ENCODE measurements at regions of chr7 and their contacts with region 1.

Region 1: DNA sequence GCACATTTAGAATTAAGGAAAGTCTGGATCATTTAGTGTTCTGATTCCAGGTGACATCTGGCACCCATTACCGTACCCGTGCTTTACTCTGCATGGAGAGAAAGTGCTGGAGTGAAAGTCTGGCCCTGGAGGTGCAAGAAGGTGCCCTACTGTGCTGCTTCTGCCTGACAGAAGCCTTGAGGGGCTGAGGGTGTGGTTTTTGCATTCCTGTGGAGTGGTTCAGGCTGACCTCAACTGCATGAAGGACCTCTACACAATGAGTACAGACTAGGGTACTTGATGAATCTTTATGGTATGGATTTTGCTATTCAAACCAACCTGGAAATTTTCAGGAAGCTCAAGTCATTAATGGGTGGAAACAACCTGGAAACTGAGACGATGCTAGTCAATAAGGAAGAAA is 45.1 kb upstream of the GSAP start:
- DNase-seq: no peak
- ATAC-seq: no peak
- H3K4me3 ChIP-seq: no peak overlapping the region
- H3K27ac ChIP-seq: peak overlapping the region; percentile 41 to 65; a peak in 5 of 6 replicates
- H3K4me1 ChIP-seq: peaks cover 74% of the 10 kb centered on the region
- CTCF ChIP-seq: no peak
- EP300 ChIP-seq: no peak
- POLR2A ChIP-seq: no peak
- RAD21 ChIP-seq: no peak

Region 2: DNA sequence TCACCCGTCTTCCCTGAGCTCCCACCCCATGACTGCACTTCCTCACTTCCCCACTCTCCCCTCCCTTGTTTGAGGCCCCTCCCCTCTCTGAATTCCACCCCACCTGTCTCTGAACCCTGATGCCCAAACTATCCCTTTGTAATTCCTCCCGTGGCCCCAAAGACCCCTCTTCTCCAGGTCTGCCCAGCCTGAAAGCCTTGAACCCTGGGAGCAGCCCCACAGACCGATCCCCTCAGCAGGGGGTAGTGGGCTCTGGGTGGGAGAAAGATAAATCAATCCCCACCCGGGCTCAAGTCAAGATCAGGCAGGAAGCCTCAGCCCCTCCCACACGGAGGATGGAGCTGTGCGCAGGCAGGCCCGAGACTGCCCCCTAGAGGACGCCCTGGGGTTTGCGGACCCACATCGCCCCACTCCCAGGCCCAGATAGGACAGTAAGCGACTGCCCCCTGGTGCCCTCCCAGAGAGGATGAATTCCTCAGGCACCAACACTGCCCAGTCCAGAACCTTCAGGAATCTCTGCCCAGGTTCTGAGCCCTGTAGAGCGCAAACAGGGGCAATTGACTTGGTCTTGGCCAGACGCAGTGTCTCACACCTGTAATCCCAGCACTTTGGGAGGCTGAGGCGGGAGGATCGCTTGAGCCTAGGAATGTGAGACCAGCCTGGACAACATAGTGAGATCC is 1147.1 kb before region 1 on chr7:
- CTCF ChIA-PET with region 1: no interaction called
- POLR2A ChIA-PET with region 1: no interaction called
- DNase-seq: peak; percentile 92 to 95
- ATAC-seq: peak; percentile 40 to 67
- H3K4me3 ChIP-seq: no peak overlapping the region
- H3K27ac ChIP-seq: peak overlapping the region; percentile 76 to 83
- H3K4me1 ChIP-seq: peaks cover 27% of the 10 kb centered on the region
- CTCF ChIP-seq: peak; percentile 100
- EP300 ChIP-seq: no peak
- POLR2A ChIP-seq: no peak
- RAD21 ChIP-seq: peak; percentile 100

Region 3: DNA sequence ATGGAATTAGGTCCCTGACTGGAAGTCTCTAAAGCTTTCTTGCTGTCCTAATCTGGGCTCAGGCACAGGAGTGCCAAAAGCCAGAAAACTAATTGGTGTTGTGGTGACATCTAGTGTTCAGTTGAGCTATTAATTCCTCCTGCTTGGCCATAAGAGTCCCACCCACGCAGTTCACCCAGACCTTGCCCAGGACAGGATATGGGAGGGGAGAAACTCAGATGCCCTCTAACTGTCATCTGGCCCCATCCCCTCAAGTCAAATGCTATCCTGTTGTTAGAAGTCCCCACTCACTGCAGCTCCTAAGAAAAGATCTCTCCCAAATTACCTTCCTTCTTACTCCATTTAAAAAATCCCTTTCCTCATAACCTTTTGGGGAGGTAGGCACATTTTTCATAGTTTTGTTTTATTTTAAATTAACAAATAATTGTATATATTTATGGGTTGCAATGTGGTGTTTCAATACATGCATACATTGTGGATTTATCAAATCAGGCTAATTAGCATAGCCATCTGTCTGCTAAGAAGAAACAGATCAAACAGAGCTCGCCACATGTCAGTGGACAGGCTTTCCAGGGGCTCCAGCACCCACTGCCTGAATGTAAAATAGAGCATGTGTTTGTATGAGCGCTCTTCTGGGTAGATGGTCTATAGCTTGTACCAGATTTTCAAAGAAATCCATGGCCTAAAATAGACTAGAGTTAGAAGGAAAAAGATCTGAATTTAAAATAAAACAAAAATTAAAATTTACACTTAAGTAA is 129.1 kb before region 1 on chr7:
- CTCF ChIA-PET with region 1: no interaction called
- POLR2A ChIA-PET with region 1: no interaction called
- DNase-seq: peak; percentile 74 to 81
- ATAC-seq: peak; percentile 97 to 99
- H3K4me3 ChIP-seq: no peak overlapping the region
- H3K27ac ChIP-seq: peak overlapping the region in 1 of 2 experiments; percentile 4; a peak in 1 of 6 replicates
- H3K4me1 ChIP-seq: peaks cover 11% of the 10 kb centered on the region; the same call in 2 of the 3 replicates
- CTCF ChIP-seq: peak; percentile 80
- EP300 ChIP-seq: no peak
- POLR2A ChIP-seq: no peak
- RAD21 ChIP-seq: peak; percentile 84 to 87

Region 4: DNA sequence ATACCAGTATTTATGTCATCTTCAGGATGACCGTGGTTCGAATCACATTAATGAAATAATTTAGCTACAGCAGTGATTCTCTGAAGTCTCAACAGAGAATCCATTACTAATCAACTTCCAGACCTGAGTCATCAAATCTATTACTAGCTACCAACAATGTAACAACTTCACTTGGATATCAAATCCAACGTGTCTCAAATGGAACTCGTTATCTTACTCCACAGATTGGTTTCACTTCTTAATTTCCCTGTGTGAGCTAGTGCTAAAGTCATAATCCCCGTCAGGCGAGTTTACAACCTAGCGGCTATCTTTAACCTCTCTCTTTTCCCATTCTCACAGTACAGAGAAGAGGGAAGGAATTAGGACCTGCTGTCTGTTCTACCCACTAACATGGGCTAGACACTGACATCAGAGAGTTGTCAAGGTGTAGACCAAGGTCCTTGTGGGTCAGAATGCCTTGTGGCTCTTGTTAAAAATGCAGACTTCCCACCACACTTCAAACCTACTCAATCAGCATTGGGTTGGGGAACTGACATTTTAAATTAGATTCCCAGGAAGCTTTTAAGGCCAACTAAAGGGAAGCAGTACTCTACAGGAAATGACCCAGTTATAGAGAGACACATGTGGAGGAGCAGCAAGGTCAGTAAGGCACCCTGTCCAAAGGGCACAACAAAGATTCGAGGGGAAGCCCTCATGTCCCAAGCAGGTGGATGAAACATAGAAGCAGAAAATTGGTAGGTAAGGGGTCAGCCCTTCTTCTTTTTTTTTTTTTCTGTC is 12.2 kb after region 1 on chr7:
- CTCF ChIA-PET with region 1: interaction called, 10 read pairs
- POLR2A ChIA-PET with region 1: interaction called, 12 read pairs
- DNase-seq: no peak
- ATAC-seq: no peak
- H3K4me3 ChIP-seq: no peak overlapping the region
- H3K27ac ChIP-seq: peak overlapping the region; percentile 31 to 66; a peak in 3 of 6 replicates
- H3K4me1 ChIP-seq: peaks cover 22% of the 10 kb centered on the region
- CTCF ChIP-seq: no peak
- EP300 ChIP-seq: no peak
- POLR2A ChIP-seq: no peak
- RAD21 ChIP-seq: no peak

Measured in A549 (cell line).